Calu3 (cell line): ENCODE measurements at regions of chr6 and their contacts with region 1.

Region 1: DNA sequence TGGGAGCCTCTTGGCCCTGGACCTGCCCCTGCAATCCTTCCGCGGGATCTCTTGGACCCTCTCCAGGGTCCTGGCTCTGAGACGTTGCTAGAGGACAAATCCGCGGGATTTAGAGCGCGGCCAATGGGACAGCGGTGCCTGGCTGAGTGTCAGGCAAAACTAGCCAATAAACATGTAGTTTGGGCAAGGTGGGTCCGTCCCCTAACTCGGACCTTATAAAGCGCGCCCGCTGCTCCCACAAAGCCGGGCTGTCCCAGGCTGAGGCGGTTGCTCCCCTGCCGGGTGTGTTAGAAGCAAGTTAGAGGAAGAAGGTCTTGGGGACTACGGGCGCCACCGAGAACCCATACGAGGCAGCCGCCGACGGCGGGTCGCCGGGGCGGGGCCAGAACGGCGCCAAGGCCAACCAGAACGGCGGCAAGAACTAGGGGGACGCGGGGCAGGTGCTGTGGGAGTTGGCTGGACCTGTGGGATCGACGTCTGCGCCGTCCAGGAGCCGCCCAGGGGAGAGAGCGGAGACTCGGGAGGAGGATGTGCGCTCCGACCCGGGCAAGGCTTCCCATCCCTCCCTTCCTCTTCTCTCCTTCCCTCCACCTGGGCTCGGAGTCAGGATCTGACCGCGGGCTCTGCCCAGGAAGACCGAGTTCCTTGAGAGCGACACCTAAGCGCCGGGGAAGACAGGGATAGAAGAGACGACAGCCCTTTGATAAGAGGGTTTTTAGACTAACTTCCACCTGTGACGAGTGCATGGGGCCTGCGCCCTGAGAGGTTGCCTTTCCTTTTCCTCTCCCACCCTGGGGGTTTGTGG is 6.5 kb upstream of the TMEM14A start:
- DNase-seq: peak; percentile 88
- H3K4me3 Mint-ChIP-seq: no peak overlapping the region
- H3K27ac Mint-ChIP-seq: no peak overlapping the region
- H3K4me1 Mint-ChIP-seq: no peaks in the 10 kb centered on the region
- H3K27me3 Mint-ChIP-seq: no peaks in the 10 kb centered on the region
- CTCF ChIP-seq: no peak

Region 2: DNA sequence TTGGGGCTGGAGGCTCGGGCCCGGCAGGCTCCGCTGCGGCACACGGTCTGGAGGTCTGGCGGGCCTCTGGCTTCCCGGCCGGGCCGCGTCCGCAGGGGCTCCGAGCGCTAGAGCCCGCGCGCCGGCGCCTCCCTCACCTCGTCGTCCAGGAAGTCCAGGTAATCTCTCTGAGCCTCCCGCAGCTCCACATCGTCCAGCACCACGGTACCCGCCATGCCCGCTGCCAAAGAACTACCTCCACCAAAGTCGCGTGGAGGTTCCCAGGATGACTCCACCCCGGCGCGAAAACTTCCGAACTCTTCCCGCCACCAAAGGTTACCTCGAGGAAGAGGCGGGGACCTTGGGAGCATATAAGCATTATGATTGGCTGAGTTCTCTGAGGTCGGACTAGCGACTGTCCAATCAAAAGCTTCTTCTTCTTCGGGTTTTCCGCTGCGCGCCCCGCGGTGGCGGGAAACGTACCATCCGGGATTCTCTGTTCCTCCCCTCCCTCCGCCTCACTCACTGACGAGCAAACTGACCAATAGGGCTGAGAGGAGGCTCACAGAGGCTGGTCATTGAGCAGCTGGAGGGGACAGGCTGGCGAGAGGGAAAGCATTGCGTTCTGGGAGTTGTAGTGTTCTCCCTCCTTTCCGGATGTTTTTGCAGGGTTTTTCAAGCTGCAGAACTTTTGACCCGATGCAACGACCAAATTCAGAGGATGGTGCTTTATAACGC is 379.8 kb before region 1 on chr6 and contains the start of gene MCM3:
- CTCF ChIA-PET with region 1: no interaction called
- intact Hi-C with region 1: loop called (anchors 5 kb)
- DNase-seq: peak; percentile 97
- H3K4me3 Mint-ChIP-seq: no peak within 1 kb of the TSS
- H3K27ac Mint-ChIP-seq: no peak within 1 kb of the TSS
- H3K4me1 Mint-ChIP-seq: peaks cover 34% of the 10 kb centered on the region
- H3K27me3 Mint-ChIP-seq: no peaks in the 10 kb centered on the region
- CTCF ChIP-seq: no peak
- total RNA-seq, gene MCM3: 116 and 117 TPM in 2 replicates

Region 3: DNA sequence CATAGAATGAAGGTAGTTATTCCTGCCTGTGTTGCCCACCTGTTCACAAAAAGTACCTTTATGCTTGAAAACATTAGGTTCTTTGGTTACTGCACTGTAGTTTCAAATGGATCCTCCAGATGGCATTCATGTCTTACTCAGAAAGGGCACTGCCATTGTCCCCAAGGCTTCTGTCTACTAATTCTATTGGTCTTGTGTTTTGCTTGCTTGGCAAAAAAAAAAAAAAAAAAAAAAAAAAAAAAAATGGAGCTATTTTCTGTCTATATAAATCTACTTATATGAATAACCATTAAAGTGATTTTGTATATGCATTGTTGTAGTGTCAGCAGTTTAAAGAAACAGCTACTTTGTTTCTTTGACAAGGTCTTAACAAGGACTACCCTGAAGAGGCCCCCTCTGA is 256.9 kb before region 1 on chr6:
- CTCF ChIA-PET with region 1: interaction called, 10 read pairs
- intact Hi-C with region 1: loop called (anchors 1 kb)
- DNase-seq: peak; percentile 24
- H3K4me3 Mint-ChIP-seq: no peak overlapping the region
- H3K27ac Mint-ChIP-seq: no peak overlapping the region
- H3K4me1 Mint-ChIP-seq: peaks cover 14% of the 10 kb centered on the region
- H3K27me3 Mint-ChIP-seq: no peaks in the 10 kb centered on the region
- CTCF ChIP-seq: no peak

Region 4: GRCh38 chr6:52419809-52420670 is 244.3 kb before region 1 on chr6 and contains the start of gene EFHC1:
- CTCF ChIA-PET with region 1: interaction called, 4 read pairs
- intact Hi-C with region 1: loop called (anchors 1 kb)
- DNase-seq: peak; percentile 98
- H3K4me3 Mint-ChIP-seq: no peak within 1 kb of the TSS
- H3K27ac Mint-ChIP-seq: no peak within 1 kb of the TSS
- H3K4me1 Mint-ChIP-seq: peaks cover 39% of the 10 kb centered on the region
- H3K27me3 Mint-ChIP-seq: no peaks in the 10 kb centered on the region
- CTCF ChIP-seq: no peak
- total RNA-seq, gene EFHC1: 18.1 and 25.6 TPM in 2 replicates

Region 5: GRCh38 chr6:52517502-52518278 is 146.7 kb before region 1 on chr6:
- CTCF ChIA-PET with region 1: no interaction called
- intact Hi-C with region 1: loop called (anchors 10 kb)
- DNase-seq: peak; percentile 76
- H3K4me3 Mint-ChIP-seq: no peak overlapping the region
- H3K27ac Mint-ChIP-seq: peak overlapping the region; percentile 78
- H3K4me1 Mint-ChIP-seq: peaks cover 56% of the 10 kb centered on the region
- H3K27me3 Mint-ChIP-seq: no peaks in the 10 kb centered on the region
- CTCF ChIP-seq: no peak

Region 6: GRCh38 chr6:52598123-52598823 is 66.1 kb before region 1 on chr6:
- CTCF ChIA-PET with region 1: no interaction called
- intact Hi-C with region 1: loop called (anchors 1 kb)
- DNase-seq: peak; percentile 79
- H3K4me3 Mint-ChIP-seq: peak overlapping the region; percentile 2
- H3K27ac Mint-ChIP-seq: no peak overlapping the region
- H3K4me1 Mint-ChIP-seq: peaks cover 21% of the 10 kb centered on the region
- H3K27me3 Mint-ChIP-seq: peaks cover 13% of the 10 kb centered on the region
- CTCF ChIP-seq: peak; percentile 68

Region 7: GRCh38 chr6:52858416-52858815 is 194.0 kb after region 1 on chr6:
- CTCF ChIA-PET with region 1: no interaction called
- intact Hi-C with region 1: no loop called
- DNase-seq: no peak
- H3K4me3 Mint-ChIP-seq: no peak overlapping the region
- H3K27ac Mint-ChIP-seq: no peak overlapping the region
- H3K4me1 Mint-ChIP-seq: peaks cover 9% of the 10 kb centered on the region
- H3K27me3 Mint-ChIP-seq: peaks cover 49% of the 10 kb centered on the region
- CTCF ChIP-seq: no peak